ENCODE measurements at regions of chr9 and their contacts with region 1.

Region 1: GRCh38 chr9:89428901-89429890 is 68.7 kb downstream of the SEMA4D start:
- DNase-seq: peak; percentile 44 to 87 (median 73)
- ATAC-seq: peak; percentile 65
- H3K4me3 ChIP-seq: no peak overlapping the region
- H3K4me3 Mint-ChIP-seq: peak overlapping the region; percentile 45
- H3K27ac ChIP-seq: peak overlapping the region in 1 of 2 experiments; percentile 66
- H3K27ac Mint-ChIP-seq: peak overlapping the region; percentile 98
- H3K4me1 ChIP-seq: peaks cover 99% of the 10 kb centered on the region
- H3K4me1 Mint-ChIP-seq: peaks cover 95% of the 10 kb centered on the region
- H3K27me3 ChIP-seq: no peaks in the 10 kb centered on the region
- H3K27me3 Mint-ChIP-seq: no peaks in the 10 kb centered on the region
- CTCF ChIP-seq: peak; percentile 75

Region 2: DNA sequence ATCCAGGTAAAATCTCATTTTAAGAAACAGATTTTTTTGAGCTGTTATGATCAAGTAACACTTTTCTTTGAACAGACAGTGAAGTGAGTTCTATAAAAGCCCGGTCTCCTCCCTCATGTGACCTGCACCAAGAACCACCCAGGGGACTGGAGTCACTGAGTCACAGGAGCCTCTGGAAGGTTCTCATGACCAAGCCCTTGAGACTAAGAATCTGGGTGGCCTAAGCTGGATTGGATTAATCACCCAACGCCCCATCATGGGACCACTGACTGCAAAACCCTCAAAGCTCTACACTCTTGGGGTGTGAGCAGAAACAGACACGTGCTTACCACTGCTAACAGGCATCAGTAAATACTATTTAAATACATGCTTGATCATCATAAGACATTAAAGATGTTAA is 62.5 kb before region 1 on chr9:
- CTCF ChIA-PET with region 1: no interaction called
- POLR2A ChIA-PET with region 1: no interaction called
- intact Hi-C with region 1: no loop called
- DNase-seq: no peak
- ATAC-seq: no peak
- H3K4me3 ChIP-seq: no peak overlapping the region
- H3K4me3 Mint-ChIP-seq: no peak overlapping the region
- H3K27ac ChIP-seq: no peak overlapping the region
- H3K27ac Mint-ChIP-seq: peak overlapping the region; percentile 41
- H3K4me1 ChIP-seq: no peaks in the 10 kb centered on the region
- H3K4me1 Mint-ChIP-seq: no peaks in the 10 kb centered on the region
- H3K27me3 ChIP-seq: no peaks in the 10 kb centered on the region
- H3K27me3 Mint-ChIP-seq: no peaks in the 10 kb centered on the region
- CTCF ChIP-seq: no peak

Region 3: GRCh38 chr9:89418882-89419640 is 10.1 kb before region 1 on chr9:
- CTCF ChIA-PET with region 1: interaction called, 19 read pairs
- POLR2A ChIA-PET with region 1: interaction called, 3 read pairs
- intact Hi-C with region 1: no loop called
- DNase-seq: peak; percentile 45 to 85 (median 77)
- ATAC-seq: peak; percentile 65
- H3K4me3 ChIP-seq: peak overlapping the region; percentile 27 to 36
- H3K4me3 Mint-ChIP-seq: peak overlapping the region; percentile 81
- H3K27ac ChIP-seq: peak overlapping the region; percentile 52 to 76
- H3K27ac Mint-ChIP-seq: peak overlapping the region; percentile 98
- H3K4me1 ChIP-seq: peaks cover 70% of the 10 kb centered on the region
- H3K4me1 Mint-ChIP-seq: peaks cover 88% of the 10 kb centered on the region
- H3K27me3 ChIP-seq: no peaks in the 10 kb centered on the region
- H3K27me3 Mint-ChIP-seq: no peaks in the 10 kb centered on the region
- CTCF ChIP-seq: no peak

Region 4: DNA sequence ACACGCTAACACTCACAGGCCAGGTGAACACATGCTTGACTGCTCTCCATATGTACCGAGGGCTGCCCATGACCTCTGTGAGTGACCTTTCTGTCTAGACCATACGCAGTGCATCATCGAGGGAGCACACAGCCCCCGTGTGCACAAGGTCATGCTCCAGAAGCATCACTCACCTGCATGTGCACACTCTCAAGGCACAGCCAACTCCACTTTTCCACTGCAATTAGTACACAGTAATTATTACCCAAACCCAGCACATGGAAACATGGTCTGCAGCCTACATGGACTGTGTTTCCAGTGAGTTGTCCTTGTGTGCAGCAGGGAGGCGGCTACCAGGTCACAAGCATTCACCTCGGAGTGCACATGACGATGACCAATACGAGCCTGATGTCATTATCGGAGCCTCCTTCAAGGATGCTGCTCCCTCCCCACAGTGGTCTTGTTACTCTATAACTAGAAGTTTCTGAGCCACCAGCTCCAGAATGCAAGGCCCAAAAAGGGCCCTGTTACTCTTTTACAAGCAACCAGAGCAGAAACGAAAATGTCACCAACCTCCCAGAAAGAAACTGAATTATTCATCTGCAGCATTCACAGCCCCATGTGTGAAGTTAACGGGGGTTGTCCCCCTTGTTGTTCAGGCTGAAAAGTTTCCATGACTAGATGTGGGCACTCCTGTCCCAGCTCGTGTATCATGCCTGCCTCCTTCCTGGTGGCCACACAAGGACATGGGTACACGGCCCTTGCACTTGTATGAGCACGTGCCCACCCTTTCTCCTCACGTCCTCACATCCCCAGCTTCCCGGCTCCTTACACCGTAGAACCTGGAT is 37.5 kb after region 1 on chr9:
- CTCF ChIA-PET with region 1: interaction called, 5 read pairs
- POLR2A ChIA-PET with region 1: interaction called, 4 read pairs
- intact Hi-C with region 1: loop called in 1 of 2 experiments (anchors 2 kb)
- DNase-seq: peak in 4 of 9 experiments; percentile 38 to 70 (median 46)
- ATAC-seq: peak; percentile 7
- H3K4me3 ChIP-seq: peak overlapping the region in 1 of 2 experiments; percentile 38
- H3K4me3 Mint-ChIP-seq: peak overlapping the region; percentile 80
- H3K27ac ChIP-seq: peak overlapping the region; percentile 61 to 71
- H3K27ac Mint-ChIP-seq: peak overlapping the region; percentile 99
- H3K4me1 ChIP-seq: peaks cover 98% of the 10 kb centered on the region
- H3K4me1 Mint-ChIP-seq: peaks cover 96% of the 10 kb centered on the region
- H3K27me3 ChIP-seq: no peaks in the 10 kb centered on the region
- H3K27me3 Mint-ChIP-seq: no peaks in the 10 kb centered on the region
- CTCF ChIP-seq: no peak

Region 5: GRCh38 chr9:89489548-89490530 is 60.6 kb after region 1 on chr9:
- CTCF ChIA-PET with region 1: interaction called, 24 read pairs
- POLR2A ChIA-PET with region 1: no interaction called
- intact Hi-C with region 1: loop called in 1 of 2 experiments (anchors 5 kb)
- DNase-seq: peak in 2 of 9 experiments; percentile 85 to 92
- ATAC-seq: peak; percentile 85
- H3K4me3 ChIP-seq: peak overlapping the region in 1 of 2 experiments; percentile 9
- H3K4me3 Mint-ChIP-seq: peak overlapping the region; percentile 72
- H3K27ac ChIP-seq: peak overlapping the region; percentile 1 to 73
- H3K27ac Mint-ChIP-seq: peak overlapping the region; percentile 92
- H3K4me1 ChIP-seq: peaks cover 91% of the 10 kb centered on the region
- H3K4me1 Mint-ChIP-seq: peaks cover 93% of the 10 kb centered on the region
- H3K27me3 ChIP-seq: no peaks in the 10 kb centered on the region
- H3K27me3 Mint-ChIP-seq: no peaks in the 10 kb centered on the region
- CTCF ChIP-seq: no peak

Region 6: DNA sequence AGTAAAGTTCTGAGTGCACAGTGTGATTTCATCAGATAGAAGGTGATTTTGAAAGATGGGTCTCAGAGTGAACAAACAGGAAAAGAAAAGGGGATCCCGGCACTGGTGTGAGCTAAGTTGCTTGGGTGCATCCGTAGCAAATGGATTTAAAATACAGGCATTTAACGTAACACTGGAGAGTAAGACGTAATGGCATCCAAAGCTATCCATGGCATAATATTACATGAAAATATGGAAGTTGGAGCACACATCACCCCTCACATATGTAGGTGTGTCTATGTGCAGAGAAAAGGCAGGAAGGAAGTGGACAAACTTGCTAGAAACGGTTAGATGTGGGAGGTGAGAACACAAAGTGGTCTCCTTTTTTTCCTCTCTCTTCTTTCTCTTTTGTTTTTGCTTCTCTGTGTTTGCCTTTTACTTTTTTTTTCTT is 107.0 kb after region 1 on chr9:
- CTCF ChIA-PET with region 1: interaction called, 10 read pairs
- POLR2A ChIA-PET with region 1: no interaction called
- intact Hi-C with region 1: no loop called
- DNase-seq: peak in 2 of 9 experiments; percentile 73 to 88
- ATAC-seq: peak; percentile 83
- H3K4me3 ChIP-seq: peak overlapping the region; percentile 9 to 13
- H3K4me3 Mint-ChIP-seq: peak overlapping the region; percentile 73
- H3K27ac ChIP-seq: peak overlapping the region; percentile 29 to 79
- H3K27ac Mint-ChIP-seq: peak overlapping the region; percentile 94
- H3K4me1 ChIP-seq: peaks cover 96% of the 10 kb centered on the region
- H3K4me1 Mint-ChIP-seq: peaks cover 94% of the 10 kb centered on the region
- H3K27me3 ChIP-seq: no peaks in the 10 kb centered on the region
- H3K27me3 Mint-ChIP-seq: no peaks in the 10 kb centered on the region
- CTCF ChIP-seq: no peak

Measured in CD8-positive, alpha-beta T cell (primary cell).